ENCODE measurements at regions of chr12 and their contacts with region 1.

Region 1: DNA sequence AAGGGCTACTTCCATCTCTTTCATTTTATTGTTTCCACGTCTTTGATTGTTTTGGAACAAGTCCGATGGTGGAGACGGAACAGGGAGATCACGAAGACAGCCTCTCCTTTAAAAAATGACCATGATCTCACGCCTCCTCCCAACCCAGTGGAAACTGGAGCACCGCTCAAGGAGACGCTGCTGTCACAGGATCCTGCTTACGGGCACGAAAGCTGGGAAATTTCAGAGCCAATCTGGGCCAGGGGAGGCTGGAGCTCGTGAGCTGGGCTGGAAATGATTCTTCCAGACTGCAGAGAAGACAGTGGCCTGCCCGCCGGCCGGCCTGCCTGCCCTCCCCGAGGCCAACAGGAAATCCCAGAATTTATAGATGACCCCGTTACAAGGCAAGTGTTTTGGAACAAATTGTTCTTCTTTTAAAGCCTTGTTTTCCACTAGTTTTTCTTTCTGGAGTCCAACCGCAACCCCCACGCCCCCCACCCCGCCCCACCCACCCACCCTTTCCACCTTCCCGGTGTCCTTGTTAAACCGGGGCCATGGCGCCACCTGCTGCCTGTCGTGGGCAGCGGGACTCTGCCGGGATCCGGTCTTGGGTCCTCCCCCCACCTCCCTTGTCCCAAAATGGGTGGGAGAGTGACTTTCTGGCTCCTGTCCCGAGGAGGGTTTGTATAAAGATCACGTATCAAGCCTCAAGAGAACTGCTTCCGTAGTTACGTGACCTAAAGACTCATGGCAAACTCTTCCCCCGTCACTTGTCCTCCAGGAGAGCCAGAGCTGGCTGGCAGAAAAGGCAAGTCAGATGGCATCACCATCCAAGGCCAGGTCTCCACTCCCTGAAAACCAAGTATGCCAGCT is 40.3 kb downstream of the MAP1LC3B2 start:
- DNase-seq: peak; percentile 23 to 61 (median 39)
- ATAC-seq: peak; percentile 79
- H3K4me3 ChIP-seq: no peak overlapping the region
- H3K4me3 Mint-ChIP-seq: peak overlapping the region in 4 of 10 donors; percentile 12 to 36 (median 22)
- H3K27ac ChIP-seq: no peak overlapping the region
- H3K27ac Mint-ChIP-seq: peak overlapping the region in 1 of 9 donors; percentile 67
- H3K4me1 ChIP-seq: peaks cover 2 to 17% of the 10 kb centered on the region in 2 donors
- H3K4me1 Mint-ChIP-seq: peaks cover 16 to 48% (median 29%) of the 10 kb centered on the region in 7 donors
- H3K27me3 ChIP-seq: no peaks in the 10 kb centered on the region
- H3K27me3 Mint-ChIP-seq: peaks cover 0 to 5% (median 0%) of the 10 kb centered on the region in 5 donors

Region 2: GRCh38 chr12:116015525-116015924 is 584.0 kb before region 1 on chr12:
- CTCF ChIA-PET with region 1: interaction called, 3 read pairs
- POLR2A ChIA-PET with region 1: no interaction called
- intact Hi-C with region 1: loop called (anchors 5 kb)
- DNase-seq: peak in 4 of 9 donors; percentile 5 to 19 (median 14)
- ATAC-seq: peak; percentile 57
- H3K4me3 ChIP-seq: no peak overlapping the region
- H3K4me3 Mint-ChIP-seq: no peak overlapping the region
- H3K27ac ChIP-seq: no peak overlapping the region
- H3K27ac Mint-ChIP-seq: peak overlapping the region in 5 of 9 donors; percentile 8 to 68 (median 45)
- H3K4me1 ChIP-seq: no peaks in the 10 kb centered on the region
- H3K4me1 Mint-ChIP-seq: peaks cover 0 to 5% (median 4%) of the 10 kb centered on the region in 7 donors
- H3K27me3 ChIP-seq: no peaks in the 10 kb centered on the region
- H3K27me3 Mint-ChIP-seq: no peaks in the 10 kb centered on the region

Region 3: GRCh38 chr12:116066381-116067230 is 532.9 kb before region 1 on chr12:
- CTCF ChIA-PET with region 1: interaction called, 3 read pairs
- POLR2A ChIA-PET with region 1: no interaction called
- intact Hi-C with region 1: loop called (anchors 1 to 2 kb)
- DNase-seq: peak; percentile 18 to 58 (median 49)
- ATAC-seq: peak; percentile 87
- H3K4me3 ChIP-seq: no peak overlapping the region
- H3K4me3 Mint-ChIP-seq: peak overlapping the region in 1 of 10 donors; percentile 14
- H3K27ac ChIP-seq: no peak overlapping the region
- H3K27ac Mint-ChIP-seq: peak overlapping the region in 4 of 9 donors; percentile 3 to 80 (median 10)
- H3K4me1 ChIP-seq: no peaks in the 10 kb centered on the region
- H3K4me1 Mint-ChIP-seq: peaks cover 22 to 72% (median 55%) of the 10 kb centered on the region in 7 donors
- H3K27me3 ChIP-seq: no peaks in the 10 kb centered on the region
- H3K27me3 Mint-ChIP-seq: no peaks in the 10 kb centered on the region

Region 4: GRCh38 chr12:116236148-116236731 is 363.3 kb before region 1 on chr12:
- CTCF ChIA-PET with region 1: interaction called, 6 read pairs
- POLR2A ChIA-PET with region 1: no interaction called
- intact Hi-C with region 1: loop called in 1 of 2 experiments (anchors 1 kb)
- DNase-seq: peak in 8 of 9 donors; percentile 34 to 61 (median 46)
- ATAC-seq: peak; percentile 85
- H3K4me3 ChIP-seq: no peak overlapping the region
- H3K4me3 Mint-ChIP-seq: peak overlapping the region in 8 of 10 donors; percentile 16 to 71 (median 44)
- H3K27ac ChIP-seq: peak overlapping the region; percentile 37
- H3K27ac Mint-ChIP-seq: peak overlapping the region; percentile 38 to 89 (median 82)
- H3K4me1 ChIP-seq: peaks cover 0 to 18% of the 10 kb centered on the region in 2 donors
- H3K4me1 Mint-ChIP-seq: peaks cover 25 to 70% (median 57%) of the 10 kb centered on the region in 7 donors
- H3K27me3 ChIP-seq: no peaks in the 10 kb centered on the region
- H3K27me3 Mint-ChIP-seq: no peaks in the 10 kb centered on the region

Region 5: GRCh38 chr12:116346741-116347140 is 252.8 kb before region 1 on chr12:
- CTCF ChIA-PET with region 1: no interaction called
- POLR2A ChIA-PET with region 1: no interaction called
- intact Hi-C with region 1: no loop called
- DNase-seq: no peak
- ATAC-seq: no peak
- H3K4me3 ChIP-seq: no peak overlapping the region
- H3K4me3 Mint-ChIP-seq: no peak overlapping the region
- H3K27ac ChIP-seq: no peak overlapping the region
- H3K27ac Mint-ChIP-seq: no peak overlapping the region
- H3K4me1 ChIP-seq: no peaks in the 10 kb centered on the region
- H3K4me1 Mint-ChIP-seq: peaks cover 0 to 5% (median 0%) of the 10 kb centered on the region in 7 donors
- H3K27me3 ChIP-seq: no peaks in the 10 kb centered on the region
- H3K27me3 Mint-ChIP-seq: peaks cover 0 to 12% (median 0%) of the 10 kb centered on the region in 5 donors

Region 6: DNA sequence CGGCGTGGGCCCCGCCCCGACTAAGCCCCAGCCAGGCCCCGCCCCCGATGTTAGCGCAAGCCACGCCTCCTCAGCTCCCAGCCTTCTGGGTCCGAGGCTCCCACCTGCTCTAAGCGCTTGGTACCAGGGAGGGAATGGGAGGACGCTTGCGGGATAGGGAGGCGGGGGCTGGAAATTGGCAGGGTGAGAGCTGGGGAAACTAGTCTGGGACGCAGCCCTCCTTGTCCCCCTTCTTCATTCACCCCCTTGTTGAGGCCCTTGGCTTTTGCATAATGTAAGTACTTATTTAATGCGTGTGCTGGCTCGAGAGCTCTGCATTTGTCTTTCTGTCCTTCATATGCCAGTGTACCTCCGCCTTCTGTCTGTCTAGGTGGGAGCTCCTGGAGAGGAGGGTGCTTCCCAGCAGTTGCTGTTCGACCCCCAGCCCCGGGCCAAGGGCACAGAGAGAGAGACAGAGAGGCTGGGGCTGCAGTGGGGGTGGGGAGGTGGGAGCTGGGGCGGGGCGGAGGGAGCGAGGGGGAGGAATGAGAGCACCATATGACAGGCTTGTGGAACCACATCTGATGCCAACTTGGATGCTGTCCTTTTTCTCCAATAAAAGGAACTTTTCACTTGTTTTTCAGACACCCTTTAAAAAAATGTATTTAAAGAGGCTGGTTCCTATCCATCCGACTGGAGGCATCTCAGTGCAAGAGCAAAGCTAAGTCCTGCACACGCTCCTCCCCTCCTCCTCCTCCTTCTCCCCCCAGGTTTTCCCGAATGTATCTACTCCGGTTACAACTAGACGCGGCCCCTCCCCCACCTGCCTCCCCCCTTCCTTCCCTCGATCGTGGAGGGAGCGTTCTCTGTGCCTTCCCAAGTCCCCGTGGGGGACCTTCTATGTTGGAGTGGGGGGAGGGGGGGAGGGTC is 65.9 kb before region 1 on chr12:
- CTCF ChIA-PET with region 1: no interaction called
- POLR2A ChIA-PET with region 1: no interaction called
- intact Hi-C with region 1: loop called (anchors 1 to 10 kb)
- DNase-seq: peak; percentile 47 to 79 (median 69)
- ATAC-seq: peak; percentile 95
- H3K4me3 ChIP-seq: peak overlapping the region; percentile 84
- H3K4me3 Mint-ChIP-seq: peak overlapping the region; percentile 82 to 97 (median 88)
- H3K27ac ChIP-seq: peak overlapping the region; percentile 47
- H3K27ac Mint-ChIP-seq: peak overlapping the region in 8 of 9 donors; percentile 22 to 82 (median 70)
- H3K4me1 ChIP-seq: peaks cover 6 to 9% of the 10 kb centered on the region in 2 donors
- H3K4me1 Mint-ChIP-seq: peaks cover 20 to 40% (median 28%) of the 10 kb centered on the region in 7 donors
- H3K27me3 ChIP-seq: no peaks in the 10 kb centered on the region
- H3K27me3 Mint-ChIP-seq: peaks cover 0 to 14% (median 0%) of the 10 kb centered on the region in 5 donors